Activated naive CD4-positive, alpha-beta T cell treated with anti-CD3 and anti-CD28 coated beads for 36 hours (primary cell): ENCODE measurements at regions of chr12 and their contacts with region 1.

Region 1: GRCh38 chr12:47715393-47715876 is 9.6 kb upstream of the RPAP3 start:
- DNase-seq: peak; percentile 90
- H3K4me3 Mint-ChIP-seq: no peak overlapping the region
- H3K27ac Mint-ChIP-seq: no peak overlapping the region
- H3K4me1 Mint-ChIP-seq: peaks cover 31% of the 10 kb centered on the region
- H3K27me3 Mint-ChIP-seq: no peaks in the 10 kb centered on the region

Region 2: GRCh38 chr12:47491516-47492305 is 223.7 kb before region 1 on chr12:
- CTCF ChIA-PET with region 1: no interaction called
- intact Hi-C with region 1: no loop called
- DNase-seq: no peak
- H3K4me3 Mint-ChIP-seq: no peak overlapping the region
- H3K27ac Mint-ChIP-seq: no peak overlapping the region
- H3K4me1 Mint-ChIP-seq: peaks cover 15% of the 10 kb centered on the region
- H3K27me3 Mint-ChIP-seq: no peaks in the 10 kb centered on the region

Region 3: DNA sequence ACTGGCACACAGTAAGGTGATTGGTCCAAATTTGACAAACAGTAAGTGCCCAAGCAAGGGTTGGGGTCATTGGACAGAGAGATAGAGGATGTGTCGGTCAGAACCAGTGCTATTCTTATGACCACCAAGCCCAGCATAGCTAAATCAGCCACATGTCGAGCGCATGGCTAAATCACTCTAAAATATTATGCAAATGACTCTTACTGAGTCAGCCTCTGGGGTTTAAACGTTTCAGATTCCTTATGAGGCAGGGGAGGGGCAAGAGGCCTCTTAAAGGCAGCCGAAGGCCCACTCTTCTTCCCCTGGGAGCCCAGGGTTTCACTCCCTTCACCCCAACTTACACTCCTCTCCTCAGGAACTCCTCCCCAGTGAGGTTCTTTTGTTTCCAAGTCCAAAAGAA is 10.5 kb after region 1 on chr12:
- CTCF ChIA-PET with region 1: interaction called, 29 read pairs
- intact Hi-C with region 1: no loop called
- DNase-seq: no peak
- H3K4me3 Mint-ChIP-seq: no peak overlapping the region
- H3K27ac Mint-ChIP-seq: no peak overlapping the region
- H3K4me1 Mint-ChIP-seq: peaks cover 19% of the 10 kb centered on the region
- H3K27me3 Mint-ChIP-seq: no peaks in the 10 kb centered on the region

Region 4: GRCh38 chr12:47758834-47759690 is 43.6 kb after region 1 on chr12 and contains the start of gene RAPGEF3:
- CTCF ChIA-PET with region 1: interaction called, 13 read pairs
- intact Hi-C with region 1: no loop called
- DNase-seq: peak; percentile 86
- H3K4me3 Mint-ChIP-seq: peak within 1 kb of the TSS; percentile 65
- H3K27ac Mint-ChIP-seq: no peak within 1 kb of the TSS
- H3K4me1 Mint-ChIP-seq: peaks cover 24% of the 10 kb centered on the region
- H3K27me3 Mint-ChIP-seq: no peaks in the 10 kb centered on the region
- total RNA-seq, gene RAPGEF3: 1.5 to 1.6 TPM

Region 5: DNA sequence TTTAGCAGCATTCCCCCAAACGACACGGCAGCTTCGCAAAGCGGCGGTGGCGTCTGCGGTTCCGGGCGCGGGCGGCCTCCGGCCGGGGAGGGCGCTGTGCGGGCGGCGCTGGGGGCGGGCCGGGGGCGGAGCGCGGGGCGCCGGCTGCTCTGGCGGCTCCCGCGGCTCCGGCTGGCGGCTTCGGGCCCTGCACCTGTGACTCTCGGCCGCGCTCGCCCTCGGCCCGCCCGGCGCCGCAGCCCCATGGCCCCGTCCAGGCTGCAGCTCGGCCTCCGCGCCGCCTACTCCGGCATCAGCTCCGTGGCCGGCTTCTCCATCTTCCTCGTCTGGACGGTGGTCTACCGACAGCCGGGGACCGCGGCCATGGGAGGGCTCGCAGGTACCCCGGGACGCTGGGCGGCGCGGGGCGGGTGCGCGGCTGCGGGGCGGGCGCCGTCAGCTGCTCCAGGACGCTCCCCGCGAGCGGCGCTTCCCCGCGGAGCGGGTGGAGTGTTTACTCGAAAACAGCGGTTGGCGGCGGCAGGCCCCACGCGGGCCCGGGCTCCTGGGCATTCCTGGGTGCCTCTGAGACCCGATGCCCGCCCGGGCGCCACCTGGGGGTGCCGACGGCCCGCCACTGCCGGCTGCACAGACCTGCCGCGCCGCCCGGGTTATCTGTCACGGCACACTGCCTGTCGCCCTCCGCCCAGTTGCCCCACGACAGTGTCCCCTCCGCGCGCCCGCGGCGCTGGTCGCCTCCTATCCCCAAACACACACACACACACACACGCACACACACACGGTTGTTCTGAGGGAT is 57.8 kb after region 1 on chr12 and contains the start of gene SLC48A1:
- CTCF ChIA-PET with region 1: interaction called, 74 read pairs
- intact Hi-C with region 1: no loop called
- DNase-seq: peak; percentile 79
- H3K4me3 Mint-ChIP-seq: peak within 1 kb of the TSS; percentile 90
- H3K27ac Mint-ChIP-seq: peak within 1 kb of the TSS; percentile 13
- H3K4me1 Mint-ChIP-seq: peaks cover 28% of the 10 kb centered on the region
- H3K27me3 Mint-ChIP-seq: no peaks in the 10 kb centered on the region
- total RNA-seq, gene SLC48A1: 16.6 to 21.0 TPM

Region 6: GRCh38 chr12:47949441-47950308 is 234.2 kb after region 1 on chr12:
- CTCF ChIA-PET with region 1: no interaction called
- intact Hi-C with region 1: loop called (anchors 2 kb)
- DNase-seq: peak; percentile 72
- H3K4me3 Mint-ChIP-seq: no peak overlapping the region
- H3K27ac Mint-ChIP-seq: no peak overlapping the region
- H3K4me1 Mint-ChIP-seq: peaks cover 4% of the 10 kb centered on the region
- H3K27me3 Mint-ChIP-seq: no peaks in the 10 kb centered on the region

Region 7: DNA sequence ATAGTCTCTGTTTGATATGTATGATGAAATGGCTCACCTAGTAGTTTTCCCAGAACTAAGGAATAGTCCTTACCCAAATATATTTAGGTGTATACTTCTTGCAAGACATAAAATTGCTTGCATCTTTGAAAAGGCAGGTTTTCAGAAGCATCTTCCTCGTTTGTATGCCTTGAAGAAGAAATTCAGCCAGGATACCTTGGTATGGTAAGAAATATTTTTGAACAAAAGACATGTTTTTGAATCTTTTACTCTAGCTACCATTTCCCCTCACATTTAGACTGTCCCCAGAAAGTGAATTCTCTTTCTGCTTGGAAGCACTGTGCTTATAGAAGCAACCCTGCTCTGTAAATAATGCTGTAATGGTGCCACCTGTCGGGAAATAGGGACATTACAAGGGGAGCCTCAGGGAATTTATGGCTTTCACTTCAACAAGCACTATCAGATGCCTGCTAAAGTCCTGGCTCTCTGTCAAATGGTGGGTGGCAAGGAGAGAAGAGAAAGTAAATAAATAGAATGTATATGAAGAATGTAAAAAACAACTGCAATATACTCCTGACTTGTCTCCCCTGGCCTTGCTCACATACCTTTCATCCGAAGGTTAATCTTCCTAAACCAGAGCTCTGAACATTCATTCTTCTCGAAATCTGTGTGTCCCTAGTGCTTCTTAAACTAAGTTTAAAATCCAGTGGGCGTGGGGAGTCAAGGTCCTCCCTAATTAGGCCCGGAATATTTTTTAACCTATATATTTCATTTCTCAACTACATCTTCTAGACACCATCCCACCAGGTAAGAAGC is 474.1 kb after region 1 on chr12:
- CTCF ChIA-PET with region 1: no interaction called
- intact Hi-C with region 1: loop called (anchors 1 kb)
- DNase-seq: peak; percentile 87
- H3K4me3 Mint-ChIP-seq: no peak overlapping the region
- H3K27ac Mint-ChIP-seq: no peak overlapping the region
- H3K4me1 Mint-ChIP-seq: peaks cover 3% of the 10 kb centered on the region
- H3K27me3 Mint-ChIP-seq: peaks cover 13% of the 10 kb centered on the region